Dorsolateral prefrontal cortex (tissue), 120 donors: ENCODE measurements at regions of chr18 and their contacts with region 1.

Region 1: DNA sequence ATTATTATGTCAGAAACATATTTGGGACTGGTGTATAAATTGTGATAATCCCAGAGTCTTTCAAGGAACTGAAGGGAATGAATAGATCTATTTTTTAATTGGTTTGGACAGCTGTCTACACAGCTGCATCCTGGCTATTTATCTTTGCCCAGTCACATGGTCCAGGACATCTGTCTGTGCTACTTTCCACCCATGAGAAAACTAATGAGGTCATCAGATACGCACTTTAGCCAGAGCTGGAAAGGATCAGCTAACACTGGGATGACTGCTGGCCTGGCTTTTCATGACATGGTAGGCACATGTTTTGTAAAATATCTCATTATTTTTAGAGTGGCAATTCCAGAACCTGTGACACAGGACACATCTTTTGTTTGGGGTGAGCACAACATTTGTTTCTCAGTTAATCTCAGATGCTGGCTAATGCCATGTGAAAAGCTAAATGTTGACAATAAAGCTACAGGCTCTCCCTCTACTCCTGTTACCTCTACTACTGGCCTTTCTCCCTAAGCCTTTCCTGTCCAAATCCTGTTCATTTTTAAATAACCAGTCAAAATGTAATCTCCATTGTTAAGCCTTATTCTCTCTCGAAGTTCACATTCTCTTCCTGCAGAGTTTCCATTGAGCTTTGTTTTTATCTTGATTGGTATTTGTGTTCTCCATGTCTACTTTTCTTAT is 500.7 kb downstream of the RIT2 start:
- DNase-seq: peak in 5 of 10 donors; percentile 42 to 65 (median 53)
- H3K4me3 ChIP-seq: no peak overlapping the region
- H3K27ac ChIP-seq: peak overlapping the region in 50 of 59 donors; percentile 2 to 87 (median 68)
- H3K27me3 ChIP-seq: no peaks in the 10 kb centered on the region
- CTCF ChIP-seq: peak in 2 of 56 donors; percentile 15 to 16

Region 2: DNA sequence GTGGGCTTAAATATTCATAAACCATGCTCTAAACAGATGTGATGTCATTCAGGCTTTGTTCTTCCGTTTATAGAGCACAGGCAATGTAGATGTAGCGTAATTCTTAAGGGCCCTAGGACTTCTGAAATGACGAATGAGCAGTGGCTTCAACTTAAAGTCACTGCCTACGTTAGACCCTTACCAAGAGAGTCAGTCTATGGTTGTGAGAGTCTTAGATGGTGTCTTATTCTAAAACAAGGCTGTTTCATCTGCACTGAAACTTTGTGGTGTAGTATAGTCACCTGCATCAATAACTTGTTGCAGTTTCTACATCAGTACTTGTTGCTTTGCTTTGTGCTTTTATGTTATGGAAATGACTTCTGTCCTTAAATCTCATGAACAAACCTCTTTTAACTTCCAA is 603.7 kb before region 1 on chr18:
- intact Hi-C with region 1: no loop called
- DNase-seq: no peak
- H3K4me3 ChIP-seq: no peak overlapping the region
- H3K27ac ChIP-seq: no peak overlapping the region
- H3K27me3 ChIP-seq: no peaks in the 10 kb centered on the region
- CTCF ChIP-seq: no peak

Region 3: DNA sequence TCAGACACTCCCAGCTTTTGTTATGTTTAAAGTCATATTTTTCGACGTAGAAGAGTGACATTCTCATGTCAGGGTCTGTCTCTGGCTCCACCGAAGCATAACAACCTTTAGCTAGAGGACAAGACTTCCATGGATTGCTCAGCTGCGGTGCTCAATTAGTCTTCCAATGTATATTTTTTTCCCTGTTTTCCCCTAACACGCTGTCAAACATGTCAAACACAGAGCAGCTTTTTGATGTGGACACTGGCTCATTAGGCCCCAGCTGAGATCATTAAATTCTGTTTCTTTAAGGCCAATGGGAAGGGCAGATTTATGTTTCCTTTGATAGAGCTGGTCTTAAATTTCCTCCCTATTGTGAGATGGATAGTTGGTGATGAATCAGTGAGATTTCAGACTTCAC is 134.3 kb before region 1 on chr18:
- intact Hi-C with region 1: no loop called
- DNase-seq: no peak
- H3K4me3 ChIP-seq: no peak overlapping the region
- H3K27ac ChIP-seq: no peak overlapping the region
- H3K27me3 ChIP-seq: no peaks in the 10 kb centered on the region
- CTCF ChIP-seq: no peak

Region 4: GRCh38 chr18:42564761-42565160 is 50.0 kb before region 1 on chr18:
- intact Hi-C with region 1: loop called in 1 of 2 experiments (anchors 2 kb)
- DNase-seq: peak in 3 of 10 donors; percentile 3 to 32 (median 31)
- H3K4me3 ChIP-seq: no peak overlapping the region
- H3K27ac ChIP-seq: no peak overlapping the region
- H3K27me3 ChIP-seq: peaks cover 0 to 4% (median 0%) of the 10 kb centered on the region in 45 donors
- CTCF ChIP-seq: no peak